ENCODE measurements at regions of chr7 and their contacts with region 1.

Region 1: GRCh38 chr7:119825091-119825655 is 447.8 kb upstream of the KCND2 start:
- DNase-seq: no peak
- ATAC-seq: no peak
- H3K4me3 ChIP-seq: no peak overlapping the region
- H3K4me3 Mint-ChIP-seq: no peak overlapping the region
- H3K27ac ChIP-seq: no peak overlapping the region
- H3K27ac Mint-ChIP-seq: no peak overlapping the region
- H3K4me1 ChIP-seq: no peaks in the 10 kb centered on the region
- H3K4me1 Mint-ChIP-seq: no peaks in the 10 kb centered on the region
- H3K27me3 ChIP-seq: no peaks in the 10 kb centered on the region
- H3K27me3 Mint-ChIP-seq: no peaks in the 10 kb centered on the region
- CTCF ChIP-seq: no peak

Region 2: DNA sequence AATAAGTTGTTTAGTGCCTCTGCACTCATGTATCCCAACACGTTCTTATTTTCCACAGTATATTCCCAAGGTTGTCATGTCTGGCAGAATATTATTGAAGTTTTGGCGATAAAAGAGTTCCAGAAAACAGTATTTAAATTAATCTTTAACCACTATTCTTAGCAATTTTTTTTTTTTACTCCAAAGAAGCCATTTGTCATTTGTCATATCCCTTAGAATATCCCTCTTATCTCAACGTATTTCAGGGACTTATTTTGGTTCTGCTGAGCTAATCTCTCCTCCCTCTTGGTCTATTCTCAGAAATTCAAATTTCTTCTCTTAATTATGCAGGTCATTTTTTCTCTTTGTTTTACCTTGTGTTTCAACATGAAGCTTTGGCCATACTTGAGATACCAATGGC is 957.3 kb before region 1 on chr7:
- CTCF ChIA-PET with region 1: no interaction called
- POLR2A ChIA-PET with region 1: no interaction called
- intact Hi-C with region 1: loop called in 1 of 2 experiments (anchors 5 kb)
- DNase-seq: no peak
- ATAC-seq: no peak
- H3K4me3 ChIP-seq: no peak overlapping the region
- H3K4me3 Mint-ChIP-seq: no peak overlapping the region
- H3K27ac ChIP-seq: no peak overlapping the region
- H3K27ac Mint-ChIP-seq: no peak overlapping the region
- H3K4me1 ChIP-seq: no peaks in the 10 kb centered on the region
- H3K4me1 Mint-ChIP-seq: no peaks in the 10 kb centered on the region
- H3K27me3 ChIP-seq: no peaks in the 10 kb centered on the region
- H3K27me3 Mint-ChIP-seq: no peaks in the 10 kb centered on the region
- CTCF ChIP-seq: no peak

Region 3: DNA sequence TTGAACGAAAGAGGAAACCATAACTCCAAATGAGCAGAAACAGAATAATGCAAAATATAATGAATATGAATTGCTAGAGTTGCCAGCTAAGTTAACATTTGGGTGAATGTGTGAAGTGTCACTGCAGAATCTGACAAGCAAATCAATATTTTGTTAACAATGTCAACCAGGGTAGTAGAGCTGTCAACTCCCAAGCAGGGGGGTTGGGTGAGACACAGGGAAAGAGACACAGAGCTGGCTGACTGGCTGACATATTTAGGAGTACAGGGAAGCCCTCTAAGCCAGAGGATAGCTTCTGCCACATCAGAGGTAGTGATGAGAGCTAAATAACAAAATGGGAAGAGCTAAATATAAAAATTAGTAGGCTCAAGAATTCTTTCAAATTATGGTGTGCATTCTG is 54.7 kb after region 1 on chr7:
- CTCF ChIA-PET with region 1: no interaction called
- POLR2A ChIA-PET with region 1: no interaction called
- intact Hi-C with region 1: loop called in 1 of 2 experiments (anchors 1 kb)
- DNase-seq: no peak
- ATAC-seq: no peak
- H3K4me3 ChIP-seq: no peak overlapping the region
- H3K4me3 Mint-ChIP-seq: no peak overlapping the region
- H3K27ac ChIP-seq: no peak overlapping the region
- H3K27ac Mint-ChIP-seq: no peak overlapping the region
- H3K4me1 ChIP-seq: no peaks in the 10 kb centered on the region
- H3K4me1 Mint-ChIP-seq: no peaks in the 10 kb centered on the region
- H3K27me3 ChIP-seq: no peaks in the 10 kb centered on the region
- H3K27me3 Mint-ChIP-seq: no peaks in the 10 kb centered on the region
- CTCF ChIP-seq: no peak